ENCODE measurements at regions of chrX and their contacts with region 1.

Region 1: GRCh38 chrX:3046253-3047240 is 5.3 kb downstream of the ARSF start:
- DNase-seq: no peak
- H3K4me3 ChIP-seq: no peak overlapping the region
- H3K27ac ChIP-seq: no peak overlapping the region
- H3K4me1 ChIP-seq: no peaks in the 10 kb centered on the region
- H3K27me3 ChIP-seq: no peaks in the 10 kb centered on the region
- CTCF ChIP-seq: no peak

Region 2: DNA sequence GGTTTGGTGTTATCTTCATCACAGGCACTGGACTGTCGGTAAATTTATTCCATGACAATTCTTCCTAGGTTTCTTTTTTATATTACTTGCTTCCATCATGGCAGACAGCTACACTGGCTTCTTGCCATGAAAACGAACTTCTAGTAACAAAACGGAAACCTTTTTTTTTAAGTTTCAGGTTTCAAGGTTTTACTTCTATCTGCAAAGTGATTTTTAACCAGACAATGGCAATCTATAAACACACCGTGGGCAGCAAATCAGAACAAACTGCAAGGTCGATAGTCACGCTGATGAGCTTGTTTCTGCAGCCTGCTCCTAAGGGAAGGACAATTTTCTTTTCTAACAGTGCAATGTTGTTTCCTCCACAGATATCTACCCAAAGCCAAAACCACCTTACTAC is 264.8 kb before region 1 on chrX:
- dilution Hi-C with region 1: no loop called
- DNase-seq: no peak
- H3K4me3 ChIP-seq: no peak overlapping the region
- H3K27ac ChIP-seq: no peak overlapping the region
- H3K4me1 ChIP-seq: peaks cover 15% of the 10 kb centered on the region
- H3K27me3 ChIP-seq: no peaks in the 10 kb centered on the region
- CTCF ChIP-seq: no peak

Region 3: GRCh38 chrX:2863629-2864028 is 182.9 kb before region 1 on chrX:
- dilution Hi-C with region 1: loop called (anchors 25 kb)
- DNase-seq: peak; percentile 1
- H3K4me3 ChIP-seq: no peak overlapping the region
- H3K27ac ChIP-seq: no peak overlapping the region
- H3K4me1 ChIP-seq: no peaks in the 10 kb centered on the region
- H3K27me3 ChIP-seq: no peaks in the 10 kb centered on the region
- CTCF ChIP-seq: no peak

Measured in keratinocyte (primary cell).